ENCODE measurements at regions of chr7 and their contacts with region 1.

Region 1: DNA sequence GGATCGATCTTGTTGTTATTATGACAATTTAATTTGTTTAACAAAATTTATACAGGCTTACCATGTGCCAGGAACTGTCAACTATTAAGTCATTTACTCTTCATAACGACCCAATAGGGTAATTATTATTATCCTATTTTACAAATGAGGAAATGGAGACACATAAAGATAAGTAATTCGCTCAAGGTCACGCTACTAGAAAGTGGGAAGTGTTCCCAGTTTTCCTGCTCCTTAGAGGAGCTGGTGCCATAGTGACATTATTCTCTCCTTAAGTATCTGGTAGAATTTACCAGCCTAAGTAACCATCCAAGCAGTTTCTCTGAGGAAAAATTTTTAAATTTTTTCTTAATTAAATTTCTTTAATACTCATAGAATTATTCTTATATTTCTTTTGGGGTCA is 360.9 kb upstream of the RNF32 start:
- DNase-seq: no peak
- H3K4me3 ChIP-seq: no peak overlapping the region
- CTCF ChIP-seq: no peak

Region 2: DNA sequence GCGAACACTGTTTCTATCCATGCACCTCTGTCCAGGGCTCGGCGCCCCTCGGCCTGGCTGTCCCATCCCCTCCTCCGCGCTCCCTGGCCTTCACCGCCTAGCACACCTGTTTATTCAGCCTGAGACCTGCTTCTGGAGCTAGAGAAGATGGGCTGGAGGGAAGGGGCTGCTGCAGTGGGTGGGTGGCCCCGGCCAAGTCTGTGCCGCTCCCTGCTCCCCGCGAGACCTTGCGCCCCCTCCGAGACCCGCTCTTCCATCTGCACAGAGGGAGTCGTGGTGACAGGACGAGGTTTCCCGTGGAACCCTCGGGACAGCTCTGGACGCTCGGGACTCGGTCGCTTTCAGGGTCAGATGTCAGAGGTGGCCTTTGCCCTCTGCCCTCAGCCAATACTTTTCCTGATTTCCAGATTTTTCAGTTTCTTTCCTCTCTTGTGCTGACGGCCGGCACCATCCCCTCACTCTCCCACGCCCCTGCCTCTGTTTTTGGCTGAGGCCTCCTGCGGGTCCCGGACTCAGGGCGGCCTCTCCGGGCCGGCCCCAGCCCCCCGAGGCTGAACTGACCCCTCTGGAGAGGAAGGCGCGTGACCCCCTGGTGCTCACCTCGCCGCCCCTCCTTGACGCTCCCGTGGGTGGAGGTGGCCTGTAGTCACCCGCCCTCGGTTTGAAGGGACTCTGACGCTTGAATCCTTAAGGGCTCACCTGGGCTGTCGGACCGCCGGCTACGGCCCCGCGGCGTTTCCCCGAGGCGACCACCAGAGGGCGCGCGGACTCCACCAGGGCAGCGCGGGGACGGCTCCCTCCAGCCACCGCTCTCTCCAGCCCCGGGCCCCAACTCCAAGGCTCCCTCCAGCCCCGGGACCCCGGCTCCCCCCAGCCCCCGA is 483.0 kb before region 1 on chr7:
- in situ Hi-C with region 1: no loop called
- DNase-seq: no peak
- H3K4me3 ChIP-seq: no peak overlapping the region
- CTCF ChIP-seq: peak; percentile 44

Region 3: GRCh38 chr7:156220078-156220605 is 59.5 kb before region 1 on chr7:
- in situ Hi-C with region 1: loop called (anchors 5 kb)
- DNase-seq: no peak
- H3K4me3 ChIP-seq: no peak overlapping the region
- CTCF ChIP-seq: no peak

Region 4: GRCh38 chr7:156318426-156318825 is 38.8 kb after region 1 on chr7:
- in situ Hi-C with region 1: loop called (anchors 5 kb)
- DNase-seq: no peak
- H3K4me3 ChIP-seq: no peak overlapping the region
- CTCF ChIP-seq: no peak

Region 5: GRCh38 chr7:156344595-156344994 is 65.0 kb after region 1 on chr7:
- in situ Hi-C with region 1: no loop called
- DNase-seq: no peak
- H3K4me3 ChIP-seq: no peak overlapping the region
- CTCF ChIP-seq: no peak